HepG2 (cell line): ENCODE measurements at regions of chr4 and their contacts with region 1.

Region 1: GRCh38 chr4:41853973-41854372 is 81.3 kb upstream of the TMEM33 start:
- DNase-seq: peak; percentile 1
- ATAC-seq: no peak
- H3K4me3 ChIP-seq: no peak overlapping the region
- H3K27ac ChIP-seq: no peak overlapping the region
- H3K4me1 ChIP-seq: no peaks in the 10 kb centered on the region
- H3K27me3 ChIP-seq: peaks cover 0 to 7% of the 10 kb centered on the region in 2 experiments; a peak in 1 of 5 replicates
- CTCF ChIP-seq: no peak; the same call in 1 of the 2 replicates
- EP300 ChIP-seq: no peak
- POLR2A ChIP-seq: no peak
- RAD21 ChIP-seq: no peak

Region 2: DNA sequence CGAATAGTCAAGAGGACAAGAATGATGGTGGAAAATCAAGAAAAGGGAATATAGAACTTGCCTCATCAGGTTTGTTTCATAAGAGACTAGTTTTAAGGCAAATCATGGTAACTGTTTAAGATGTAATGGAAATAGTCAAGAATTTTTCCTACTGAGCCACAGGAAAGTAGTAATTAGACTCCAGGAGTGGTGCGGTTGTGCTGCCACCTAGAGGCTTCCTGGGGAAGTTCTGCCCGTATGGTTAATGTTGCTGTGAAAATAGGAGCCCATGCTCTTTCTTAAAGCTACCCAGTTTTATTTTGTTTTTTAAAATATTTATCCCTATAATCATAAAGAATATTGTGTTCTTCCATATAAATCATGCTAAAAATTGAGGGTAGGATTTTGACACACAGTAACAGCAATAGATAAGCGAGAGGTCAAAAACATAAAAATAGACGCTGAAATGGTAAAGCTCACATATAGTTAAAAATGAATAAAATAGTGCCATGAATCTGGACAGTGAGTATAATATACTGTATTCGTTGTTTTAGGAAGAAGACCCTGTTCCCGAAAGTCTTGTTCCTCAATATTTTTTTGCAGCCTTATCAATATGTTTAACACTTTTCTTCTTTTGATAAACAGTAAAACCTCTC is 192.4 kb before region 1 on chr4:
- CTCF ChIA-PET with region 1: no interaction called
- POLR2A ChIA-PET with region 1: no interaction called
- in situ Hi-C with region 1: no loop called
- intact Hi-C with region 1: no loop called
- DNase-seq: peak; percentile 12
- ATAC-seq: peak; percentile 71
- H3K4me3 ChIP-seq: no peak overlapping the region
- H3K27ac ChIP-seq: no peak overlapping the region
- H3K4me1 ChIP-seq: no peaks in the 10 kb centered on the region
- H3K27me3 ChIP-seq: peaks cover 0 to 9% of the 10 kb centered on the region in 2 experiments; a peak in 3 of 5 replicates
- CTCF ChIP-seq: peak; percentile 74
- EP300 ChIP-seq: no peak
- POLR2A ChIP-seq: no peak
- RAD21 ChIP-seq: no peak

Region 3: GRCh38 chr4:41887821-41888686 is 34.1 kb after region 1 on chr4:
- CTCF ChIA-PET with region 1: interaction called, 9 read pairs
- POLR2A ChIA-PET with region 1: no interaction called
- in situ Hi-C with region 1: no loop called
- intact Hi-C with region 1: loop called (anchors 1 kb)
- DNase-seq: peak; percentile 23
- ATAC-seq: no peak
- H3K4me3 ChIP-seq: no peak overlapping the region
- H3K27ac ChIP-seq: no peak overlapping the region
- H3K4me1 ChIP-seq: peaks cover 16% of the 10 kb centered on the region
- H3K27me3 ChIP-seq: no peaks in the 10 kb centered on the region
- CTCF ChIP-seq: peak; percentile 65
- EP300 ChIP-seq: no peak
- POLR2A ChIP-seq: no peak
- RAD21 ChIP-seq: no peak